AG04449 (cell line): ENCODE measurements at regions of chr9 and their contacts with region 1.

Region 1: GRCh38 chr9:4984621-4985385 is at the start of gene JAK2:
- DNase-seq: peak; percentile 54
- H3K4me3 ChIP-seq: peak within 1 kb of the TSS; percentile 80
- CTCF ChIP-seq: peak; percentile 78

Region 2: DNA sequence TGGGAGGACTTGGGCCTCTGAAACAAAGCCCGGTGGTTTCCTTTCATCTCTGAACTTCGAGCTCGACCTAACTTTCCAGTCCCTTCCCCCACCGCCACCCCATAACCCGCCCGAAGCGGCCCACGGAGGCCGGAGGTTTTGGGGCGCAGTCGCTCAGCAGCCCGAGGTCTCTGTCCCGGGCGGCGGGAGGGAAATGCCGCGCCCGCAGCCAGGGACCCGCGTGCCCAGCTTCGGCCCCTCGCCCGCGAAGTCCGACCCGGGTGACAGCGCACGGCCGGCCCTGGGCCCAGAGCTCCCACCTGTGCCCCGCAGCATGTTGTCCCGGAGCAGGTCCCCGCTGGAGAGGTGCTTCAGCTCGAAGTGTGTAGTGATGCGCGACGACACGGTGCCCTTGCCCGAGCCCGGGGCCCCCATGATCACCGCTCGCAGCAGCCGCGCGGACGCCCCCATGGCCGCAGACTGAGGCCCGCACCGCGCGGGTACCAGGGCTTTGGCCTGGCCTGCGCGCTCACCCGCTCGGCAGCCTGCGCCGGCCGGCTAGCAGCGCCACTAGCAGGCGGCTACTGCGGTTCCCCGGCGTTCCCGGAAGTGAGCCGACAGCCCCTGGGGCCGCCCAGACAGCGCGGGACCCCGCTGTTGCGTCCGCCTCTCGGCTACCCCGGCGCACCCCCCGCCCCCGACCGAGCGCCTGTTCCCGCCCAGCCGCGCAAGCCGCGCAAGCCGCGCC is 244.0 kb before region 1 on chr9 and contains the start of gene AK3:
- CTCF ChIA-PET with region 1: interaction called, 14 read pairs
- POLR2A ChIA-PET with region 1: no interaction called
- DNase-seq: peak; percentile 17
- H3K4me3 ChIP-seq: peak within 1 kb of the TSS; percentile 82
- CTCF ChIP-seq: peak; percentile 57

Region 3: GRCh38 chr9:4750023-4750673 is 234.7 kb before region 1 on chr9:
- CTCF ChIA-PET with region 1: interaction called, 89 read pairs
- POLR2A ChIA-PET with region 1: no interaction called
- DNase-seq: no peak
- H3K4me3 ChIP-seq: no peak overlapping the region
- CTCF ChIP-seq: peak; percentile 40

Region 4: GRCh38 chr9:4792572-4793458 is 192.0 kb before region 1 on chr9 and contains the start of gene RCL1:
- CTCF ChIA-PET with region 1: interaction called, 22 read pairs
- POLR2A ChIA-PET with region 1: interaction called, 9 read pairs
- DNase-seq: peak; percentile 45
- H3K4me3 ChIP-seq: peak within 1 kb of the TSS; percentile 93
- CTCF ChIP-seq: no peak

Region 5: DNA sequence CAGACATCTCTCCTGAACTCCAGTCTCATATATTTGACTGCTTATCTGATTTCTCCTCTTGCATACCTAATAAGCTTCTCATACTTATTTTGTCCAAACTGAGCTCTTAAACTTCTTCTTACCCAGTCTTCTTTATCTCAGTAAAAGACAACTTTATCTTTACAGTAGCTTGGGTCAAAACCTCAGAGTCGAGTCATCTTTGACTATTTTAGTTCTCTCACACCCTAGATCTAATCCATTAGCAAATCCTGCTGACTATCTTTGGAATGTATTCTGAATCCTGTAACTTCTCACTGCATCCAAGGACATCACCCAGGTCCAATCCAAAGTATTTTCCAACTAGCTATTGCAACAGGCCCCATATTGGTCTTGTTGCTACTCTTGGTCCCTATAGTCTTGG is 11.6 kb before region 1 on chr9:
- CTCF ChIA-PET with region 1: interaction called, 12 read pairs
- POLR2A ChIA-PET with region 1: no interaction called
- DNase-seq: no peak
- H3K4me3 ChIP-seq: no peak overlapping the region
- CTCF ChIP-seq: no peak

Region 6: DNA sequence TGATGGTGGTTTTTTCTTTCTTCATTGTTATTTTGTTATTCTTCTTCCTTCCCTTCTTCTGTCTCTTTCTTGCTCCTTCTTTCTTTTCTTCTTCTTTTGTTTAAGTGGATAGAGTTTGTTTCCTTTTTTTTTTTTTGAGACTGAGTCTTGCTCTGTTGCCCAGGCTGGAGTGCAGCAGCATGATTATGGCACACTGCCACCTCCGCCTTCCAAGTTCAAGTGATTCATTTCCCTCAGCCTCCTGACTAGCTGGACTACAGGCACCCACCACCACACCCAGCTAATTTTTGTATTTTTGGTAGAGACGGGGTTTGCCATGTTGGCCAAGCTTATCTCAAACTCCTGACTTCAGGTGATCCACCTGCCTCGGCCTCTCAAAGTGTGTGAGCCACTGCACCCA is 40.6 kb after region 1 on chr9:
- CTCF ChIA-PET with region 1: interaction called, 10 read pairs
- POLR2A ChIA-PET with region 1: no interaction called
- DNase-seq: no peak
- H3K4me3 ChIP-seq: no peak overlapping the region
- CTCF ChIP-seq: no peak